Activated naive CD4-positive, alpha-beta T cell treated with anti-CD3 and anti-CD28 coated beads for 36 hours (primary cell): ENCODE measurements at regions of chr3 and their contacts with region 1.

Region 1: DNA sequence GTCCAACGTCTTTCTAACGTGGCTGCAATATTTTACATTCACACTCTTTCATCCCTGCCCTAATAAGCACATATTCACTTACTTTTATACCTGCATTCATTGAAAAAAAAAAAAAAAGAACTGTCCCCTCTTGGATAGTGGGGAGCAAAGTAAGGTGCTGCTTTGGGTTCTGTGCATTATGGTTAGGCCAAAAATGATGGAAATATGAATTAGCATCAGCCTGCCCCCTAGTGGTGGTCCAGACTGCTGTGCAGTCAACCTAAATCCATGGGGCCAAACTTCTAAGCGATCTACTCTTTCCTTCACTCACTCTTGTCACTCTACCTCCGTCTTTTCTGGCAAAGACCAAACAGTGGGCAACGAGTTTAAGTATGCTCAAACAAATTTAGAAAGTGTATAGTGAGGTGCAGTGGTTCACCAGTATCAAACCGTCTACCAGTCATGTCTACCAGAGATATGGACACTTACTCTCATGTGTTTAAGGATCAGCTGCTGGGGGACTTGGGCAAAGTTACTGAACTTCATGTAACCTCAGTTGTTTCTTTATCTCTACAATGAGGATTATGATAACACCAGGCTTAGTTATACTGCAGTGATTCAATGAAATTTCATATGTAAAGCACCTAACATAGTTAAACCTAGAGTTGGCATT is 61.5 kb upstream of the GRM7 start:
- DNase-seq: peak; percentile 62
- H3K4me3 Mint-ChIP-seq: no peak overlapping the region
- H3K27ac Mint-ChIP-seq: no peak overlapping the region
- H3K4me1 Mint-ChIP-seq: no peaks in the 10 kb centered on the region
- H3K27me3 Mint-ChIP-seq: no peaks in the 10 kb centered on the region

Region 2: GRCh38 chr3:6204891-6205290 is 594.5 kb before region 1 on chr3:
- CTCF ChIA-PET with region 1: no interaction called
- intact Hi-C with region 1: loop called (anchors 2 kb)
- DNase-seq: no peak
- H3K4me3 Mint-ChIP-seq: no peak overlapping the region
- H3K27ac Mint-ChIP-seq: no peak overlapping the region
- H3K4me1 Mint-ChIP-seq: no peaks in the 10 kb centered on the region
- H3K27me3 Mint-ChIP-seq: no peaks in the 10 kb centered on the region